H1 (cell line): ENCODE measurements at regions of chr5 and their contacts with region 1.

Region 1: DNA sequence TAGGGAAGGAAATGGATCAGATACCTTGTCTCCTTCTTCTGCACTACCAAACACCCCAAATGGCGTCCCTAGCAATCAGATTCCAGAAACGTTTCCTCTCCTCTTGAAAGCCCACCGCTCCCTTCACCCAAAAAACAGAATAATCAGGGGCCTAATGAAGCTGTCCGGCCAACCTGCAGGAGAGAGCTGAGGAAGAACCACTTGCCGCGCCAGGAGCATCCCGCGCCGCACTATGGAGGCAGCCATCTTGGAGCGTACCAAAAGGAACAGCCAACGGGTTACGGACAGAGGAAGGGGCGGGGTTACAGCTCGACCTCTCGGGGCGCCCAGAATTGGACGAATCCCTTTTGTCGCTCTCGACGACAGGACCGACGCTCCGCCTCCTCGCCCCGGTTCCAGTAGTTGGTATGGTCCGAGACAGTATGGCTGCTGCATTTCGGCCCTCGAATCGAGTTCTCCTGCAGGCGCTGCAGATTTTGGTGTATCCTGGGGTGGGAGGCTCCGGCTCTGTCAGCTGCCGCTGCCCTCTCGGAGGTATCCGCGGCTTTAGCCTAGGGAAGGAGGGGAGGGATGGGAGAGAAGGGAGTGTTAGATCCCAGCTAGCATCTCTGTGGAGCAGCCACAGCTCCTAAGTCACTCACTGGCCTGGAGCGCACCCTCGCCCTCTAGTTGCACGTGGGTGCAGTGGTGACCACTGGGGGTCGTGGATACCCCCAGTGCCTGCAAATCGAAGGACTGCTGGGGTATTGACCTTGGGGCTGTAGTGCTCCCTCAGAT is at the starts of genes MRPS27 and PTCD2:
- DNase-seq: peak; percentile 90 to 98
- H3K4me3 ChIP-seq: peak within 1 kb of the TSS; percentile 70 to 99 (median 81)
- H3K27ac ChIP-seq: peak within 1 kb of the TSS; percentile 82
- H3K4me1 ChIP-seq: no peaks in the 10 kb centered on the region; a peak in 3 of 7 replicates
- H3K27me3 ChIP-seq: no peaks in the 10 kb centered on the region
- CTCF ChIP-seq: peak in 2 of 3 experiments; percentile 19 to 28; a peak in 3 of 4 replicates
- EP300 ChIP-seq: peak in 1 of 2 experiments; percentile 98; a peak in 2 of 3 replicates
- POLR2A ChIP-seq: peak; percentile 95 to 97
- RAD21 ChIP-seq: no peak
- total RNA-seq, gene MRPS27: 102 and 105 TPM in 2 replicates
- total RNA-seq, gene PTCD2: 12.6 and 15.4 TPM in 2 replicates

Region 2: DNA sequence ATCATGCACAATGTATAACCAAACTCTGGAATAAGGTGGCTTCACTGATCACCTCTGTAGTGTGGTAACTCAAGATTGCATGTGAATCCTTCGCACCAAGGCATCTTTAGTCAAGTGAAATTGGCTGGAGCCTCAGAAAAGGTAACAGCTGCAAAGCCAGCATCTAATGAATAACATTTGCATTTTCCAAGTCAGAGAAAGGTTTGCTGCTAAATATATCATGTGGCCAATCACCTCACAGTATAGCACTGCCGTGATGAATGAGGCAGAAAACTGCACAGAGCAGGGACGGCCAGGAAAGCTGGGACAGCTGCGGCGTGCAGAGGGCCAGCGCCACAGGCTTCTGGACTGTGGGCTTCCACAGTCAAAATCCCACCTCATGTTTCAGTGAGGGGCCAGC is 18.6 kb before region 1 on chr5:
- CTCF ChIA-PET with region 1: interaction called, 5 read pairs
- POLR2A ChIA-PET with region 1: interaction called, 44 read pairs
- DNase-seq: no peak
- H3K4me3 ChIP-seq: peak overlapping the region in 1 of 4 experiments; percentile 29; a peak in 1 of 8 replicates
- H3K27ac ChIP-seq: peak overlapping the region; percentile 30; the same call in 1 of the 2 replicates
- H3K4me1 ChIP-seq: peaks cover 2 to 14% (median 10%) of the 10 kb centered on the region in 4 experiments; a peak in 5 of 7 replicates
- H3K27me3 ChIP-seq: no peaks in the 10 kb centered on the region
- CTCF ChIP-seq: no peak
- EP300 ChIP-seq: no peak
- POLR2A ChIP-seq: no peak
- RAD21 ChIP-seq: no peak

Region 3: GRCh38 chr5:72307968-72308852 is 12.0 kb before region 1 on chr5:
- CTCF ChIA-PET with region 1: interaction called, 12 read pairs
- POLR2A ChIA-PET with region 1: interaction called, 44 read pairs
- DNase-seq: peak; percentile 89 to 93
- H3K4me3 ChIP-seq: peak overlapping the region; percentile 46 to 75 (median 62)
- H3K27ac ChIP-seq: peak overlapping the region; percentile 94
- H3K4me1 ChIP-seq: peaks cover 0 to 3% (median 0%) of the 10 kb centered on the region in 4 experiments; a peak in 2 of 7 replicates
- H3K27me3 ChIP-seq: no peaks in the 10 kb centered on the region
- CTCF ChIP-seq: peak; percentile 60 to 67 (median 63)
- EP300 ChIP-seq: no peak
- POLR2A ChIP-seq: peak in 1 of 2 experiments; percentile 95; a peak in 2 of 3 replicates
- RAD21 ChIP-seq: peak; percentile 55 to 73